Prostate gland (tissue), 2 donors: ENCODE measurements at regions of chr15 and their contacts with region 1.

Region 1: DNA sequence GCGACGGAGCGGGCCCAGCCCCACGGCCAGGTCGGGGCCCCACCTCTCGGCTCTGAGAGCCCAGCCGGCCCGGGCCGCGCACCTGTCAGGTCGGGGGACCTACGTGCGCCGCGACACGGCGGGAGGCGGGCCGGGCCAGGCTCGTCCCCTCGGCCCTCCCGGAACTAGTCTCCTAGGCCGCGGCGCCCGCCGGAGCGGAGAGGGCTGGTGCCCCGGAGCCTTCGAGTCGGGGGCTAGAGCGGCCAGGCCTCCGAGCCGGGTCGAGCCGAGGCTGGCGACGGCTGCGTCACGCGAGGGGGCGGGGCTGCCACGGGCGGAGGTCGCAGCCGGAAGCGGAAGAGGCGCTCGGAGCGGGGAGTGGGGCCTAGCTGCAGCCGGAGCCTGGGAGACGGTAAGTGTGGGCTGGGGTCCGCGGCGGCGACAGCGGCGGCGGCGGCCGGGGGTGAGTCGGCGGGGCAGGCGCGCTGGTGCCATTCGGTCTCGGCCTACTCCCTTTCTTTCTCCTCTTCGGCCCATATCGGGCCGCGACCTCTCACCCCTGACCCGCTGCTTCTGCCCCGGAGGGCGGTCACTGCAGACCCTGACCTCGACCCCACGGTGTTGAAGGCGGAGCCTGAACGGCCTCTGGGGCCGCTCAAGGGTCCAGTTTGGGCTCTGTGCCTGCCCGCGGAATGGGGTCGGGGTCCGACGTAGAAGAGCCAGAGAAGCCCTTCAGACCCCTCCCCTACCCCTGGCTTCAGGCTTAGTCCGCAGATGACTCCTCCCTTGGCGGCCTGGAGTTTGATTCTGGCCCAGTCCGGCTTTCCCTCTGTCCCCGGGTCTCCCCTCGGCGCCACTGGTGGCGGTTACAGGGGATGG is at the start of gene CLK3:
- DNase-seq: peak; percentile 95
- H3K4me3 ChIP-seq: peak within 1 kb of the TSS; percentile 98 to 100
- H3K27ac ChIP-seq: peak within 1 kb of the TSS; percentile 95 to 96
- H3K4me1 ChIP-seq: peaks cover 16% of the 10 kb centered on the region
- H3K27me3 ChIP-seq: no peaks in the 10 kb centered on the region
- CTCF ChIP-seq: peak in 1 of 4 experiments; percentile 11
- POLR2A ChIP-seq: peak; percentile 86
- total RNA-seq, gene CLK3: 140 to 180 TPM

Region 2: DNA sequence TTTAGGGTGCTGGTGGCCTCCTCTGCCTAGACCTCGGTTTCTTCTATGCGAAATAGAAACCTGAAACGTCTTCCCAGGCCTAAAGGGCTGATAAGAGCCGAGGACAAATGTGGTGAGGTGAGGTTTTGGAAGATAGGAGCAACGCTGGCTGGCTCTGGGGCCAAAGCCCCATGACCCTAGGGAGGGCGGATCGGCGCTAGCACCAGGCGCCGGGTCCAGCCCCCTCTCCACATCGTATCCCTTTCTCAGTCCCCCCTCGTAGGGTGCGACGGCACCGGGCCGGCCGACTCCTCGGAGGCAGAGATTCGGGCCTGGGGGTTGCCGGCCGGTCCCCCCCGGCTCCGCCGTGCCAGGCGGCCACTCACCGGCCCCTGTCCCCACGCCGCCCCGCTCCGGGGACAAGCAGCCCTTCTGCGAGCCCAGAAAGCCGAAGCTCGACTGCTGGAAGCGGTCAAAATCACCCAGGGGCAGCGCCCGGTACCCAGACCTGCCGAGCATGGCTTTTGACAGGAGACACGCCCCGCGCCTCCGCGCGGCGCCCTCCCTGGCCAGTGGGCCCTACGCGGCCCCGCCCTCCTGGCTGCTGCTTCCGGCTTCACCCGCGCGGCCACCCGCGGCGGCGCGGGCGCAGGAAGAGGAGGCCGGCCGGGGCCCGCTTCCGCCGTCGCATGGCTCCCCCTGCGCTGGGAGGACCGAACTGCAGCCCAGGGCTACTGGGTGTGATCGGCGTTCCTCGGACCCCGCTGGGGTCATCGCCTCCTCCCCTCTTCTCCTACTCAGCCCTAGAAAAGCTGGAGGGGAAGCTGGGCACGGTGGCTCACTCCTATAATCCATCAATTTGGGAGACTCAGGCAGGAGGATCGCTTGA is 623.8 kb before region 1 on chr15 and contains the start of gene STOML1:
- intact Hi-C with region 1: loop called (anchors 10 kb)
- DNase-seq: peak; percentile 87
- H3K4me3 ChIP-seq: peak within 1 kb of the TSS; percentile 68 to 70
- H3K27ac ChIP-seq: peak within 1 kb of the TSS; percentile 72 to 74
- H3K4me1 ChIP-seq: peaks cover 4% of the 10 kb centered on the region
- H3K27me3 ChIP-seq: no peaks in the 10 kb centered on the region
- CTCF ChIP-seq: peak; percentile 77 to 97 (median 92)
- POLR2A ChIP-seq: peak; percentile 46
- total RNA-seq, gene STOML1: 15.6 to 26.8 TPM

Region 3: GRCh38 chr15:74460871-74461846 is 154.6 kb before region 1 on chr15 and contains the start of gene UBL7:
- intact Hi-C with region 1: loop called (anchors 5 kb)
- DNase-seq: peak; percentile 98
- H3K4me3 ChIP-seq: peak within 1 kb of the TSS; percentile 55 to 60
- H3K27ac ChIP-seq: peak within 1 kb of the TSS; percentile 73 to 82
- H3K4me1 ChIP-seq: no peaks in the 10 kb centered on the region
- H3K27me3 ChIP-seq: no peaks in the 10 kb centered on the region
- CTCF ChIP-seq: peak in 3 of 4 experiments; percentile 25 to 47 (median 39)
- POLR2A ChIP-seq: peak; percentile 87
- total RNA-seq, gene UBL7: 83.1 to 85.2 TPM

Region 4: DNA sequence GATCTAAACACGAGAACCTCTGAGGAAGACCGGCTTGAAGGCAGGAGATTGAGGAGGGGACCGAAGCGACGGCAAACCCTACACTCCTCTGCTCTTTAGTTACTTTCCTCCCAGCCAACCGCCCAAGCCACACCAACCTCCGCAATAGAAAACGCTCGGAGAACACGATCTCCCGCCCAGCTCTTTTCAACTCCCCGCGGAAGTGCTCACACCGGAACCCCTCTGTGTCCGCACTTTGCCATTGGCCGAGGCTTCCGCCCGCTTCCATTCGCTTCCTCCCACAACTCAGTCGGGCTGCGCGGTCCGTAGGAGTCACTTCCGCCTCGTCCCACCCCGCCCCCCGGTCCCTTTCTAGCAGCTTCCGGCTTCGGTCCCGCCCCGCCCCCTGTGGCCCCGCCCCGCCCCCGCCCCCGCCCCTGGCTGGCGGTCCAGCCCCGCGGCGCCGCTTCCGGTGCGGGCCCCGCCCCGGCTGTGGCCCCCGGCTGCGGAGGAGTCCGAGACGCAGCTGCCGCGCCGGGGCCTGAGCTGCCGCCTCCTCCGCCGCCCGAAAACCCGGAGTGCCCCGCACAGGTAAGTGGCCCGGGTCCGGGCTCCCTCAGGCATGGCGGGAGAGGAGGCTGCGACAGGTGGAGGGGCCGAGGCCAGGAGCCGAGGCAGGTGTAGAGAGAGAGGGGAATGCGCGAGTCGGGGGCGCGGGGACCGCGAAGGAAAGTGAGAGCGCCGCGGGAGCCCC is 74.8 kb before region 1 on chr15 and contains the start of gene ARID3B:
- intact Hi-C with region 1: loop called (anchors 1 kb)
- DNase-seq: peak; percentile 98
- H3K4me3 ChIP-seq: peak within 1 kb of the TSS; percentile 84 to 94
- H3K27ac ChIP-seq: peak within 1 kb of the TSS; percentile 78 to 81
- H3K4me1 ChIP-seq: peaks cover 1% of the 10 kb centered on the region
- H3K27me3 ChIP-seq: no peaks in the 10 kb centered on the region
- CTCF ChIP-seq: no peak
- POLR2A ChIP-seq: peak; percentile 45
- total RNA-seq, gene ARID3B: 5.1 to 36.7 TPM

Region 5: GRCh38 chr15:74598126-74598842 is 17.5 kb before region 1 on chr15:
- intact Hi-C with region 1: loop called (anchors 2 kb)
- DNase-seq: peak; percentile 94
- H3K4me3 ChIP-seq: peak overlapping the region; percentile 46 to 57
- H3K27ac ChIP-seq: peak overlapping the region; percentile 86 to 91
- H3K4me1 ChIP-seq: peaks cover 9% of the 10 kb centered on the region
- H3K27me3 ChIP-seq: no peaks in the 10 kb centered on the region
- CTCF ChIP-seq: peak in 1 of 4 experiments; percentile 20
- POLR2A ChIP-seq: peak; percentile 95

Region 6: GRCh38 chr15:75302318-75302717 is 686.6 kb after region 1 on chr15:
- intact Hi-C with region 1: no loop called
- DNase-seq: no peak
- H3K4me3 ChIP-seq: no peak overlapping the region
- H3K27ac ChIP-seq: no peak overlapping the region
- H3K4me1 ChIP-seq: no peaks in the 10 kb centered on the region
- H3K27me3 ChIP-seq: peaks cover 4% of the 10 kb centered on the region
- CTCF ChIP-seq: no peak
- POLR2A ChIP-seq: no peak